ENCODE measurements at regions of chr19 and their contacts with region 1.

Region 1: GRCh38 chr19:1131738-1132551 is 28.2 kb downstream of the GPX4 start:
- DNase-seq: peak; percentile 89 to 94 (median 91)
- ATAC-seq: peak; percentile 45 to 89 (median 86)
- H3K4me3 ChIP-seq: peak overlapping the region; percentile 42 to 96 (median 78)
- H3K27ac ChIP-seq: peak overlapping the region; percentile 67 to 100 (median 92)
- H3K4me1 ChIP-seq: peaks cover 11 to 83% (median 33%) of the 10 kb centered on the region in 12 donors
- H3K27me3 ChIP-seq: no peaks in the 10 kb centered on the region
- CTCF ChIP-seq: peak in 5 of 12 donors; percentile 17 to 47 (median 26)
- POLR2A ChIP-seq: peak in 1 of 2 donors; percentile 46

Region 2: DNA sequence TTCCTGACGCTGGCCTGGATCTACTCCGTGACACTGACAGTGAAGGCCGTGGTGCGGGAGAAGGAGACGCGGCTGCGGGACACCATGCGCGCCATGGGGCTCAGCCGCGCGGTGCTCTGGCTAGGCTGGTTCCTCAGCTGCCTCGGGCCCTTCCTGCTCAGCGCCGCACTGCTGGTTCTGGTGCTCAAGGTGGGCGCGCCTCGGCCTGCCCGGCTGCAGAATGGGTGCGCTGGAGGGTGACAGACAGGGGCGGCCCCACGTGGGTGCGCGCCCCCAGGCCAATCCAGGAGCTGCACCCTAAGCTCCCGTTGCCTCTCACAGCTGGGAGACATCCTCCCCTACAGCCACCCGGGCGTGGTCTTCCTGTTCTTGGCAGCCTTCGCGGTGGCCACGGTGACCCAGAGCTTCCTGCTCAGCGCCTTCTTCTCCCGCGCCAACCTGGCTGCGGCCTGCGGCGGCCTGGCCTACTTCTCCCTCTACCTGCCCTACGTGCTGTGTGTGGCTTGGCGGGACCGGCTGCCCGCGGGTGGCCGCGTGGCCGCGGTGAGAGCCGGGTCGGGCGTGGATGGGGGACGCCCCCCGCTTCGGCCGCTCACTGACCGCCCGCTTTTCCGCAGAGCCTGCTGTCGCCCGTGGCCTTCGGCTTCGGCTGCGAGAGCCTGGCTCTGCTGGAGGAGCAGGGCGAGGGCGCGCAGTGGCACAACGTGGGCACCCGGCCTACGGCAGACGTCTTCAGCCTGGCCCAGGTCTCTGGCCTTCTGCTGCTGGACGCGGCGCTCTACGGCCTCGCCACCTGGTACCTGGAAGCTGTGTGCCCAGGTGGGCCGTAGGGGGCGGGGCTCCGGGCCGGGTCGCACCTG is 84.9 kb before region 1 on chr19:
- intact Hi-C with region 1: loop called in 1 of 10 experiments (anchors 2 kb)
- DNase-seq: no peak
- ATAC-seq: no peak
- H3K4me3 ChIP-seq: no peak overlapping the region
- H3K27ac ChIP-seq: no peak overlapping the region
- H3K4me1 ChIP-seq: peaks cover 0 to 3% (median 0%) of the 10 kb centered on the region in 12 donors
- H3K27me3 ChIP-seq: no peaks in the 10 kb centered on the region
- CTCF ChIP-seq: no peak
- POLR2A ChIP-seq: no peak

Region 3: GRCh38 chr19:1154731-1155351 is 22.9 kb after region 1 on chr19:
- intact Hi-C with region 1: loop called in 1 of 10 experiments (anchors 1 kb)
- DNase-seq: peak; percentile 79 to 94 (median 90)
- ATAC-seq: peak; percentile 67 to 86 (median 84)
- H3K4me3 ChIP-seq: peak overlapping the region in 9 of 12 donors; percentile 18 to 49 (median 22)
- H3K27ac ChIP-seq: peak overlapping the region; percentile 44 to 98 (median 76)
- H3K4me1 ChIP-seq: peaks cover 15 to 63% (median 44%) of the 10 kb centered on the region in 12 donors
- H3K27me3 ChIP-seq: no peaks in the 10 kb centered on the region
- CTCF ChIP-seq: peak in 2 of 12 donors; percentile 5 to 11
- POLR2A ChIP-seq: peak in 1 of 2 donors; percentile 53

Region 4: GRCh38 chr19:1183534-1184172 is 51.7 kb after region 1 on chr19:
- intact Hi-C with region 1: loop called in 2 of 10 experiments (anchors 5 kb)
- DNase-seq: no peak
- ATAC-seq: no peak
- H3K4me3 ChIP-seq: no peak overlapping the region
- H3K27ac ChIP-seq: no peak overlapping the region
- H3K4me1 ChIP-seq: peaks cover 0 to 30% (median 2%) of the 10 kb centered on the region in 12 donors
- H3K27me3 ChIP-seq: no peaks in the 10 kb centered on the region
- CTCF ChIP-seq: no peak
- POLR2A ChIP-seq: no peak